ENCODE measurements at regions of chr11 and their contacts with region 1.

Region 1: DNA sequence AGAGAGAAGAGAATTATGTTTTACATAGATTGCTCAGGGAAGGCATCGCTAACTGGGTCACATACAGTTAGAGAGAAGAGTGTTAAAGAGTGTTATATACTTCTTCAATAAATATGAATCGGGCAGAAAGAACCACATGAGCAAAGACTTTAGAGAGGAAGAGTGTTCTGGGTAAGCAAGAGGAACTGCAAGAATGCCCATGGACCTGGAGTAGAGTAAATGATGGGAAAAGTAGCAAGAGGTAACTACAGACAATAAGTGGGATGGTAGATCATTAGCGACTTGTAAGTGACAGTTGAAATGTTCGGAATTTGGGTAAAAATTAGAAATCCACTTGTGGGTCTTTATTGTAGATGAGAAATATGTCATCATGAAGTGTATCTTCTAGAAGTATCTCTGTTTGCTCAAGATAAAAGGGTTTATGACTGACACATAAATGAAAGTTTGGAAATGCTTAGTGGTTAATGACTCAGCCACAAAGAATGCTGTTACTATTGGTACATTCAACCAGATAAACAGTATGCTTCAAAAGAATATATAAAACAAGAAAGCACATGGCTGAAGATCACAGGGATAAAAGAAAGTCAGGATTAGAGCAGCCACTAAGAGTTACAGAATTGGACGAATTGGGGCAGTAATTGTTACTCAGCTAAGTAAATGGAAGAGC is 229.3 kb downstream of the CASP12 start:
- DNase-seq: peak; percentile 98
- ATAC-seq: peak; percentile 93
- H3K4me3 ChIP-seq: no peak overlapping the region
- H3K27ac ChIP-seq: peak overlapping the region; percentile 49
- H3K4me1 ChIP-seq: peaks cover 36% of the 10 kb centered on the region
- H3K27me3 ChIP-seq: no peaks in the 10 kb centered on the region
- CTCF ChIP-seq: no peak

Region 2: GRCh38 chr11:104623518-104623917 is 45.4 kb before region 1 on chr11:
- CTCF ChIA-PET with region 1: no interaction called
- POLR2A ChIA-PET with region 1: no interaction called
- intact Hi-C with region 1: loop called (anchors 5 kb)
- DNase-seq: peak; percentile 89
- ATAC-seq: peak; percentile 97
- H3K4me3 ChIP-seq: peak overlapping the region; percentile 3; the same call in 1 of the 2 replicates
- H3K27ac ChIP-seq: peak overlapping the region; percentile 16
- H3K4me1 ChIP-seq: peaks cover 26% of the 10 kb centered on the region
- H3K27me3 ChIP-seq: no peaks in the 10 kb centered on the region
- CTCF ChIP-seq: no peak

Region 3: DNA sequence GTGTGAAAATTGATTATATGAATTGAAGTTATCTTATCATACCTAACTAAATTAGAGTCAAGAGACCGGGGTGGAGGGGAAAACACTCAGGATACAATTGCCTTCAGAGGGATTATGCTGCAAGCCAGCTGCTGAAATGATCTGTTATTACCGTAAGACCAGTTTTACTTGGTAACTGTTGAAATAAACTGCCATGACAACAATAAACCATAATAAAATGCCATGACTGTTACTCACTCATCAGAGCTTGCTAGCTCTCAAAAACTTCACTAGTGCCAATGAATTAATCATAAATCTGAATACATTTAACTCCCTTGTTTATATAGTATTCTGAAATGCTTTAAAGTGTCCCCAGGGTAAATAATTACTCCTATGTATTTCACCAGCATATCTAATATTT is 161.2 kb after region 1 on chr11:
- CTCF ChIA-PET with region 1: no interaction called
- POLR2A ChIA-PET with region 1: no interaction called
- intact Hi-C with region 1: loop called (anchors 5 kb)
- DNase-seq: peak; percentile 85
- ATAC-seq: peak; percentile 96
- H3K4me3 ChIP-seq: no peak overlapping the region
- H3K27ac ChIP-seq: no peak overlapping the region
- H3K4me1 ChIP-seq: peaks cover 9% of the 10 kb centered on the region
- H3K27me3 ChIP-seq: no peaks in the 10 kb centered on the region
- CTCF ChIP-seq: no peak